Endothelial cell of umbilical vein (primary cell): ENCODE measurements at regions of chr5 and their contacts with region 1.

Region 1: GRCh38 chr5:41856644-41857491 is 13.4 kb downstream of the OXCT1 start:
- DNase-seq: peak; percentile 77
- H3K4me3 ChIP-seq: no peak overlapping the region
- H3K27ac ChIP-seq: no peak overlapping the region
- H3K4me1 ChIP-seq: no peaks in the 10 kb centered on the region
- H3K27me3 ChIP-seq: no peaks in the 10 kb centered on the region
- CTCF ChIP-seq: peak; percentile 61
- POLR2A ChIP-seq: no peak

Region 2: DNA sequence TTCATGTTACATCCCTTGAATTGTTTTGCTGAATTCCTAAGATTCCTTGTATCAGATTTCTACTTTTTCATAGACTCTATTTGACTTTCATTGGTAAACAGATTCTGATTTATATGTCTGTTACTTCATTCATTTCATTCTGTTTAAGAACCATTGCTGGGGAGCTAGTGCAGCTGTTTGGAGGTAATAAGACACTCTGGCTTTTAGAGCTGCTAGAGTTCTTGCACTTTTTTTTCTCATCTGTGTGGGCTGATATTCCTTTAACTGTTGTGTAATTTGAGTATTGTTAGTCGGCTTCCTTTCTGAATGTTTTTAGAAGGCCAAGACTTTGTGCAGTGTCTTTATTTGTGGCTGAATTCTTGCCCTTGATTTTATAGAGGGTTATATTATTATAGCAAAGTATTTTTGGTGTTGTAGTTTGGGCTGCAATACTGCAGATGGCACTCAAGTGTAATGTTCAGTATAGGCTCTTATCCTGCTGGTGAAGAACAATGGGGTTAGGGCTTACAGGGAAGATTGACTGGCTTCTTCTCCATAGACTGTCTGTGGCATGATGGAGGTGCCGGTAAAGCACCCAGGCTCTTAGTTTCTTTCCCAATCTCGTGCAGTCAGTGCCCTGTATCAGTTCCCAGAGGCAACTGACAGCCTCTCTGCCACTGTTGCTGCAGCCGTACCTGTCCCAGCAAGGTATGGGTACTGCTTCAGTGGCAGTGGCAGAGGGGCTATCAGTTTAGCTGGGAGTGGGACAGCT is 148.8 kb before region 1 on chr5:
- CTCF ChIA-PET with region 1: interaction called, 10 read pairs
- POLR2A ChIA-PET with region 1: no interaction called
- dilution Hi-C with region 1: no loop called
- intact Hi-C with region 1: no loop called
- DNase-seq: peak; percentile 57
- H3K4me3 ChIP-seq: no peak overlapping the region
- H3K27ac ChIP-seq: no peak overlapping the region
- H3K4me1 ChIP-seq: no peaks in the 10 kb centered on the region
- H3K27me3 ChIP-seq: peaks cover 4 to 16% of the 10 kb centered on the region in 2 experiments
- CTCF ChIP-seq: peak; percentile 51 to 52
- POLR2A ChIP-seq: no peak

Region 3: DNA sequence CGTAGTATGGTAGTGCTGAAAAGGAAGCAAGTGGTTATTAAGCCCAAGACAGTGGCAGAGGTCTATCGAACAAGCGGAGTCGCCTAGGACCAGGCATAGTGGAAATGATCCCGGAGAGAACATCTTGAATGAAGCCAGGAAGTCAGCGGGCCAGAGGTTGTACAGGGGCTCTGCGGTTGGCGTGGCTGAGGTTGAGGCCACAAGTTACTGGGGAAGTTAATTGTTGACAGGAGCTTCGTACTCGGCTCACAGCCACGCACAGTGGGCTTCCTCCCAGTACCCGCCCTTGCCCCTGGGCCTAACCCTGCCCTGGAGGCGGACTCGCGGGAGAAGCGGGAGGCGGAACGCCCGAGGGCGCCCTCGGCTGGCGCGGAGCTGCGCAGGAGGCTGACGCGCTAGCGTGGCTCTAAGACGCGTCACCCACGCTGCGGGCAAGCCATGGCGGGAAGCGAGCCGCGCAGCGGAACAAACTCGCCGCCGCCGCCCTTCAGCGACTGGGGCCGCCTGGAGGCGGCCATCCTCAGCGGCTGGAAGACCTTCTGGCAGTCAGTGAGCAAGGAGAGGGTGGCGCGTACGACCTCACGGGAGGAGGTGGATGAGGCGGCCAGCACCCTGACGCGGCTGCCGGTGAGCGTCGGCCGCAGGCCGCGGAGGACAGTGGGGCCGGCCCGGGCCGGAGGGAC is 68.1 kb after region 1 on chr5 and contains the start of gene FBXO4:
- CTCF ChIA-PET with region 1: interaction called, 7 read pairs
- POLR2A ChIA-PET with region 1: no interaction called
- dilution Hi-C with region 1: no loop called
- intact Hi-C with region 1: loop called (anchors 1 kb)
- DNase-seq: peak; percentile 88
- H3K4me3 ChIP-seq: peak within 1 kb of the TSS; percentile 27 to 77 (median 66)
- H3K27ac ChIP-seq: peak within 1 kb of the TSS; percentile 92
- H3K4me1 ChIP-seq: peaks cover 22% of the 10 kb centered on the region
- H3K27me3 ChIP-seq: no peaks in the 10 kb centered on the region
- CTCF ChIP-seq: peak; percentile 50 to 74
- POLR2A ChIP-seq: peak; percentile 86
- total RNA-seq, gene FBXO4: 7.0 and 7.7 TPM in 2 replicates

Region 4: DNA sequence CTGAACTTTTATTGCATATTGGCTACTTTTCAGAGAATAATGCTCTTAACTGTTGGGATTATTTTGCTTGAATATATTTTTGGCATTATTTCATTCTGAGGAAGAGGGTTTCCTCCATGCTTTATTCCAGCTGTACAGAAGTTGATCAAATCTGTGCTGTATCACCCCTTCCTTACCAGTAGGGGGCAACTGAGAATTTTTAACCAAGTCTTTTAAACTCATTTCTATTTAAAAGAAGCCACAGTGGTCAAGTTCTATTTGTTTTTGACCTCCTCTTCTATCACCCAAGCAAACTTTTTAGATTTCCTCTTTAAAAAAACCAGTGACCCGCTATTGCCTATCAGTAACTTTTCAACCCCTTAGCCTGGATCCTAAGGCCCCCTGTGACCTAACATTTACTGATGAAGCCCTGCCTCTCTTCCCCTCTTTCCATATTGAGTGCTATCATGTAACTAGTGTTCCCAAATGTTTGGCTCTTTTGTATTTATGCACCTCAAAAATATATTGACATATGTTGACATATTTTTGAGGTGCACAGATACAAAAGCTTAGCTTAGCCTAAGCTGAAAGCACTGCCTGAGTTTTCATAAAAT is 148.8 kb after region 1 on chr5:
- CTCF ChIA-PET with region 1: interaction called, 9 read pairs
- POLR2A ChIA-PET with region 1: no interaction called
- dilution Hi-C with region 1: no loop called
- intact Hi-C with region 1: loop called (anchors 1 kb)
- DNase-seq: peak; percentile 21
- H3K4me3 ChIP-seq: no peak overlapping the region
- H3K27ac ChIP-seq: no peak overlapping the region
- H3K4me1 ChIP-seq: no peaks in the 10 kb centered on the region
- H3K27me3 ChIP-seq: no peaks in the 10 kb centered on the region
- CTCF ChIP-seq: peak; percentile 49 to 60
- POLR2A ChIP-seq: no peak